ENCODE measurements at regions of chr10 and their contacts with region 1.

Region 1: DNA sequence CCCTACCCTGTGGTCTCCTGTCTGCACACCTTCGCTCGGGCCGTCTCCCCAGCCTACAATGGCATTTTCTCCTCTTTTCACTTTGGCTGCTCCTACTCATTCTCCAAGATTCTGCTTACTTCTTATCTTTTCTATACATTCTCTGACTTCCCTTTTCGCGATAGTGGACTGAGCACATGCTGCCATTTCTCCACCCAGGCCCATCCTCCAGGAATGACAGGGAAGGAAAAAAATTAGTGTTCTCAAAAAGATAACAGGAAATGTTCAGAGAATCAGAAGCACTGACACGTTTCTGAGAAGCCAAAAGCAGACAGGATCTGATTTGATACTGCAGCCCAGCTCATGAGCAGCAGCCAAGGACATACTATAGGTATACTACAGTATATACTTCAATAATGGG is 6.4 kb upstream of the ANXA11 start:
- DNase-seq: no peak
- ATAC-seq: no peak

Region 2: GRCh38 chr10:80144696-80145354 is 67.0 kb before region 1 on chr10:
- intact Hi-C with region 1: loop called (anchors 5 to 10 kb)
- DNase-seq: no peak
- ATAC-seq: peak; percentile 26

Measured in left colon (tissue), 2 donors.